ENCODE measurements at regions of chr9 and their contacts with region 1.

Region 1: DNA sequence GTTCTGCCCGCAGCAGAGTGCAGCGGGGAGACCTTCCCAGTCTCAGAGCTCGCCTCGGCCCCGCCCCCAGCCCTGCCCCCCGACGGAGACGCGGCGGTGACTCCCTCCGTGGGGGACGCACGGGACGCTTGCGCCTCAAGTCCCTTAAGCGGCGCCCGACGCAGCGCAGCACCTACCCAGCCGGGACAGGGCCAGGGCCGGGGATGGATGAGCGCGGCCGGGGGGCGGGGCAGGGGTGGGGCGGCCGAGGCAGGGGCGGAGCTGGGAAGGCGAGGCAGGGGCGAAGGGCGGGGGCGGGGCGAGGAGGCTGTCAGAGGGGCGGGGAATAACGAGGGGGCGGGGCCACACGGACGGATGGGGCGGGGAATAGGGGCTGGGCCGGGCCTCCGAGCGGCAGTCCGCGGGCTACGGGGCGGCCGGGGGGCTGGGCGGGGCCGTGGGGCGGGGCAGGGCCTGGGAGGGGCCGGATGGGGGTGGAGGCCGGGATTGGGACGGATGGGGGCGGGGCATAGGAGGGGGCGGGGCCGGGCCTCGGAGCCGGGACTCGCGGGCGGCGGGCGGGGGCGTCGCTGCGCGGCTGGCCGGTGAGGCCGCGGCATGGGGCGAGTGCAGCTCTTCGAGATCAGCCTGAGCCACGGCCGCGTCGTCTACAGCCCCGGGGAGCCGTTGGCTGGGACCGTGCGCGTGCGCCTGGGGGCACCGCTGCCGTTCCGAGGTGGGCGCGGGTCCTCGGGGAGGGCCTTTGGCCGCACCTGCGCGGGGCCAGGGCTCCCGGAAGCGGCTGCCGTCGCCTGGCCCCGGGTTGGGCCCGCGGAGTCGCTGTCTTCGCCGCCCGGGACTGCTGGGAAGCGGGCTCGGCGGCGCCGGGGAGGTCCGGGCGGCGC is at the start of gene ARRDC1:
- DNase-seq: peak; percentile 87
- ATAC-seq: peak; percentile 86
- H3K4me3 Mint-ChIP-seq: peak within 1 kb of the TSS; percentile 72
- H3K27ac Mint-ChIP-seq: no peak within 1 kb of the TSS
- H3K4me1 Mint-ChIP-seq: peaks cover 16% of the 10 kb centered on the region
- H3K27me3 Mint-ChIP-seq: peaks cover 28% of the 10 kb centered on the region
- CTCF ChIP-seq: no peak
- total RNA-seq, gene ARRDC1: 41.2 to 48.3 TPM (median 41.3 TPM) in 3 replicates

Region 2: GRCh38 chr9:137590462-137591383 is 14.6 kb before region 1 on chr9 and contains the start of gene ZMYND19:
- CTCF ChIA-PET with region 1: interaction called, 11 read pairs
- POLR2A ChIA-PET with region 1: interaction called, 15 read pairs
- DNase-seq: peak; percentile 88
- ATAC-seq: peak; percentile 94
- H3K4me3 Mint-ChIP-seq: peak within 1 kb of the TSS; percentile 97
- H3K27ac Mint-ChIP-seq: peak within 1 kb of the TSS; percentile 99
- H3K4me1 Mint-ChIP-seq: peaks cover 5% of the 10 kb centered on the region; the same call in 1 of the 2 replicates
- H3K27me3 Mint-ChIP-seq: peaks cover 8% of the 10 kb centered on the region
- CTCF ChIP-seq: no peak
- total RNA-seq, gene ZMYND19: 61.9 to 77.9 TPM (median 63.8 TPM) in 3 replicates

Region 3: GRCh38 chr9:137682431-137682991 is 77.1 kb after region 1 on chr9:
- CTCF ChIA-PET with region 1: no interaction called
- POLR2A ChIA-PET with region 1: no interaction called
- DNase-seq: no peak
- ATAC-seq: peak; percentile 18
- H3K4me3 Mint-ChIP-seq: no peak overlapping the region
- H3K27ac Mint-ChIP-seq: peak overlapping the region; percentile 98
- H3K4me1 Mint-ChIP-seq: peaks cover 85% of the 10 kb centered on the region
- H3K27me3 Mint-ChIP-seq: no peaks in the 10 kb centered on the region
- CTCF ChIP-seq: no peak

Measured in WTC11 (cell line).